ENCODE measurements at regions of chr14 and their contacts with region 1.

Region 1: GRCh38 chr14:88363644-88364043 is 21.8 kb upstream of the SPATA7 start:
- H3K4me3 ChIP-seq: no peak overlapping the region
- H3K27ac ChIP-seq: no peak overlapping the region
- H3K4me1 ChIP-seq: no peaks in the 10 kb centered on the region
- CTCF ChIP-seq: no peak

Region 2: DNA sequence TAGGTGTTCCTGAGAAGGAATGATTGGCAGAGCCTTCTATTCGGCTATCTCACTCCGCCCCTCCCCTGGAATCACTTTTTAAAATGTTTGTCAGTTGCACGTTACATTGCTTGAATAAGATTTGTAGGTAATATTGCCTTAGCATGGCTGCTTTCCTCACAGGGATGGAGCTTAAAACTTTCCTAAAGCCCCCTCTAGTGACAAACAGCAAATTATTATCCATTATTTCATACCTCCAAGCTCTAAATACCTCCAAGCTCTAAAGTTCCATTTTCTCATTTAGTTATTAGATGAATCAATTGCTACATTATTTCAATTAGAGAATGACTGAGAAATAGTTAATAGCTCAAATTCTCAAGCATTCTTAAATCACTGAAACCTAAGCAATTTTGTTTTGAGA is 16.8 kb after region 1 on chr14:
- CTCF ChIA-PET with region 1: interaction called, 10 read pairs
- POLR2A ChIA-PET with region 1: no interaction called
- H3K4me3 ChIP-seq: no peak overlapping the region
- H3K27ac ChIP-seq: no peak overlapping the region
- H3K4me1 ChIP-seq: no peaks in the 10 kb centered on the region
- CTCF ChIP-seq: no peak